Head of caudate nucleus (tissue), 42 donors: ENCODE measurements at regions of chr5 and their contacts with region 1.

Region 1: DNA sequence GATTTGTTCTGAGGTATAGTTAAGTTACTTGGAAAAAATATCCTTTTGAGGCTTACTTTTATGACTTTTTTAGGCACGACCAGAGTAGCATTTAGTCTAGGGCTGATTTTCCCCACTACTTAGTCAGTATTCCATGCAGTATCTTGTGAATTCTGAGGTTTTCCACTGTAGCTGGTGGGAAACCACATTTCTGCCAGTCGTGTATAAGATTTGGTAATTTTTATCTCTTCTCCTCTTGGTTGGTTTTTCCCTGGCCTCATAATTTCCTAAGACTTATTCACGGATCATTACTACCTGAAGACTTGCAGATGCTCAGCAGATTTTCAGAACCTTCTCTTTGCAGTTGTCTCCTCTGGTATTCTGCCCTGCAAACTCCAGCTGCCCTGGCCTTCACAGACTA is 23.5 kb downstream of the MTREX start:
- DNase-seq: no peak

Region 2: DNA sequence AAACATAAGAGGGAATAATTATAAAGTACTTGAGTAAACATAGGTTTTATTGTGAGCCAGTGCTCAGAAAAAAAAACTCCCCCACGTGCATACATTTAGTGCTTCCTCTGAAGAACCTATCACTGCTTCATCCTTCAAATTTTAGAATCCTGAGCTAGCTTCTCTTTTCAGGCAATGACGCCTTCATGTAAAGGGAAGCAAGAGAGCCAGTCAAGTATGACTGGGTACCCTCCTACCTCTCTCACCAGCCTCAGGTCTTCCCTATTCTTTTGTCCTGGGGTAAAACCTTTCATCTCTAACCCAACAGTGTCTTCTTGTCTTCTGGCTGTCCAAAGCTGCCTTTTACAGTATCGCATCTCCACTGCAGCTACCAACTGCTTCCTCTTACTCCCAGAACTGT is 171.4 kb after region 1 on chr5:
- intact Hi-C with region 1: no loop called
- DNase-seq: no peak

Region 3: GRCh38 chr5:55691265-55692105 is 360.2 kb after region 1 on chr5:
- intact Hi-C with region 1: loop called (anchors 5 kb)
- DNase-seq: no peak

Region 4: GRCh38 chr5:55749387-55749786 is 418.1 kb after region 1 on chr5:
- intact Hi-C with region 1: no loop called
- DNase-seq: no peak